ENCODE measurements at regions of chr16 and their contacts with region 1.

Region 1: GRCh38 chr16:10906914-10907756 is 30.1 kb downstream of the CIITA start:
- DNase-seq: no peak
- ATAC-seq: no peak
- H3K4me3 ChIP-seq: no peak overlapping the region
- H3K27ac ChIP-seq: no peak overlapping the region
- H3K4me1 ChIP-seq: no peaks in the 10 kb centered on the region
- H3K27me3 ChIP-seq: no peaks in the 10 kb centered on the region
- CTCF ChIP-seq: no peak

Region 2: GRCh38 chr16:10765772-10766171 is 141.4 kb before region 1 on chr16:
- intact Hi-C with region 1: loop called in 1 of 2 experiments (anchors 10 kb)
- DNase-seq: no peak
- ATAC-seq: peak in 1 of 4 donors; percentile 25
- H3K4me3 ChIP-seq: no peak overlapping the region
- H3K27ac ChIP-seq: no peak overlapping the region
- H3K4me1 ChIP-seq: no peaks in the 10 kb centered on the region
- H3K27me3 ChIP-seq: no peaks in the 10 kb centered on the region
- CTCF ChIP-seq: no peak

Region 3: GRCh38 chr16:10835281-10835931 is 71.7 kb before region 1 on chr16:
- intact Hi-C with region 1: loop called (anchors 5 to 10 kb)
- DNase-seq: no peak
- ATAC-seq: no peak
- H3K4me3 ChIP-seq: no peak overlapping the region
- H3K27ac ChIP-seq: no peak overlapping the region
- H3K4me1 ChIP-seq: no peaks in the 10 kb centered on the region
- H3K27me3 ChIP-seq: no peaks in the 10 kb centered on the region
- CTCF ChIP-seq: no peak

Region 4: DNA sequence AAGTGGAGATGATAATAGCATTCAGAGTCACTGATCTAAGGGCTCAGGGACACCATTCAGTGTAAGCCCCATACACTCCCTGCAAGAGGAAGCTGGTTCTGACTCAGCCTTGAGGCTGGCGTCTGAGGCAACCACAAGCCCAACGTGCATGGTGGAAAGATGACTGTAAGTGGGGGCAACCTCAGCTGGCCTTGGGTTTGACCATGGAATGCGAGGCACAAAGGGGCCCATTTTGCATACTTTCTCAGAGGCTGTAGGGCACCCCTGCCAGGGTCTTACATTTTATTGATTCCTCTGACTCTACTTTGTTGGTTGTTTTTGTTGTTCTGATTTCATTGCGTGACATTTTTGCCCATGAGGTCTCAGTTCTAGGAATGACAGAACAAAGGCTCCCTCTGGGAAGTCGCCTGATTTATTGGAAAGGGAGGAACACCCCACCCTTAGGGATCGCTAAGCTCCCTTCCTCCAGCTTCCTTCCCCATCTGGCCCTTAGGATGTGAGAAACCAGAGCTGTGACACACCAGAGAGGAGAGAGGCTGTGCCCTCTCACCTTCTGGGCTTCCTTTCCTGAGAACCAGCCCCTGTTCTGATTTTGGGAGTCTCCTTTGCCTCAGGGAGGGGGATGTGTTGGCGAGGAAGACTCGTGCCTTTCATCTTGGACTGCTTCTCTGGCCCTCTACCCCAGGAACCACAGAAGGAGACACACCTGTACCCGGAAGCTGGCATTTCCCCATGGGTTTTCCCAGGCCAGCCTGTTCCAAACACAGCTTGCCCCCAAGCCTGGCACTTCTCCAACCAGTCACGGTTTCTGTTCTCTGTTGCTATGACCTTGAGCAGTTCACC is 35.8 kb before region 1 on chr16:
- intact Hi-C with region 1: no loop called
- DNase-seq: peak in 1 of 2 donors; percentile 36
- ATAC-seq: peak in 3 of 4 donors; percentile 48 to 53 (median 48)
- H3K4me3 ChIP-seq: no peak overlapping the region
- H3K27ac ChIP-seq: peak overlapping the region; percentile 36
- H3K4me1 ChIP-seq: peaks cover 12% of the 10 kb centered on the region
- H3K27me3 ChIP-seq: peaks cover 0 to 8% (median 3%) of the 10 kb centered on the region in 3 donors
- CTCF ChIP-seq: no peak

Region 5: GRCh38 chr16:10944249-10945064 is 37.3 kb after region 1 on chr16 and contains the start of gene CLEC16A:
- intact Hi-C with region 1: no loop called
- DNase-seq: peak; percentile 99
- ATAC-seq: peak; percentile 80 to 88 (median 82)
- H3K4me3 ChIP-seq: peak within 1 kb of the TSS; percentile 99
- H3K27ac ChIP-seq: peak within 1 kb of the TSS; percentile 91
- H3K4me1 ChIP-seq: peaks cover 46% of the 10 kb centered on the region
- H3K27me3 ChIP-seq: no peaks in the 10 kb centered on the region
- CTCF ChIP-seq: no peak
- total RNA-seq, gene CLEC16A: 18.3 to 24.5 (median 22.4) TPM